Left cardiac atrium (tissue), 4 donors: ENCODE measurements at regions of chr11 and their contacts with region 1.

Region 1: DNA sequence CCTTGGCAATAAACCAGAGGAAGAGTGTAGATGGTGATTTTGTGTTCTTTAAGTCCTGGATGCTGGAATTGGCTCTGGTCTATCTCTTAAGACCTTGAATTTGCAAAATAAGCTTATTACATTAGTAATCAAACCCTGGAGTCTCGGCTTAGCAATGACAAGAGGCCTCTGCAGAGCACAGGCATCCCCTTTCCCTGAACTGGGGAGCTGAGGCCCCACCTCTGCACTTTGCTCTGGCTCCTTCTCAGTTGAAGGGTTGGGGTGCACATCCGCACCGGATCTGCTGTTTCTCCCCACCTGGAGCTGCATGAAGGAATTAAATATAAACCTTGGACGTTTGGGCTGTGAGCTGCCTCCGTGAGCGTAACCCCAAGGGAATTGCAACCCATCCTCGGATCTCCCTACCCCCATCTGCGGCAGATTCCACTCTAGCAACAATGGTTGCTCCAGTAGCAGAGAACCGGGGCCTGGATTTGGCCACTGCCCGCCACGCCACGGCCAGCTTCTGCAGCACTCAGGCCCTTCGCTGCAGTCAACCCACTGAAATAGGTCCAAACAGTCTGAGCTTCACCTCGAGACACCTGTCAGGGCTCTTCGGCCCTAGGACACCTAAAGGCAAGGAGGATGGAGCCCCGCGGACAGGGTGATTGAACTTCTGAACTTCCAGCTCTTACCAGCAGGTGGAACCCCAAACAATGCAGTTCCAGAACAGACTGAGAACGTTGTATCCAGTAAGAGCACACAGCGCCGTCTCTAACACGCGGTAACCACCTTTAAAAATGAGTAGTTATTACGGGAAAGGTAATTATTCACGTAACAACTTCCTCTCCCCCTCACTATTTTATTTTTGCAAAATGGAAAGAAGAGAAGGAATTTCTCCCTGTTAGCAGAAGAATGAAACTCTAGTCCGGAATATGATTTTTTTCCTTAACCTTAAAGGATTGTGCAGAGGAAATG is 54.8 kb upstream of the CAPRIN1 start:
- DNase-seq: peak; percentile 62
- ATAC-seq: peak; percentile 96 to 98

Region 2: DNA sequence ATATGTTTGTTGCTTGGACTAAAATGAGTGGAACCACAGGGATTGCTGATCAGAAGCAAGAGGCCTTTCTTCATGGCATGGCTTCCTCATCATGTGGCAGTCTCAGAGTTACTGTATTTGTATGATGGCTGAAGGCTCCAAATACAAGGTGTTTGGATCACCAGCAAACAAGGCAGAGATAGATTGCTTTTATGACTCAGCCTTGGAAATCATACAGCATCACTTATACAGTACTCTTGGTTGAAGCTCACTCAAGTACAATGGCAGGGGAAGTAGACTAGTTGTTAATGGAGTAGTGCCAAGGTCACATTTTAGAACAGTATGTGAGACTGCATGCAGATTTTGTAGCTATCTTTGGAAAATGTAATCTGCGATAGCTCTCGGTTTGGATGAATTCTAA is 71.3 kb after region 1 on chr11:
- intact Hi-C with region 1: no loop called
- DNase-seq: no peak
- ATAC-seq: peak; percentile 88 to 90

Region 3: GRCh38 chr11:34105079-34105956 is 108.5 kb after region 1 on chr11 and contains the start of gene NAT10:
- intact Hi-C with region 1: loop called in 1 of 2 experiments (anchors 10 kb)
- DNase-seq: peak; percentile 98
- ATAC-seq: peak; percentile 98
- total RNA-seq, gene NAT10: 20.1 to 29.0 TPM

Region 4: GRCh38 chr11:34174412-34175041 is 177.8 kb after region 1 on chr11:
- intact Hi-C with region 1: loop called in 1 of 2 experiments (anchors 5 kb)
- DNase-seq: peak; percentile 88
- ATAC-seq: peak; percentile 98

Region 5: DNA sequence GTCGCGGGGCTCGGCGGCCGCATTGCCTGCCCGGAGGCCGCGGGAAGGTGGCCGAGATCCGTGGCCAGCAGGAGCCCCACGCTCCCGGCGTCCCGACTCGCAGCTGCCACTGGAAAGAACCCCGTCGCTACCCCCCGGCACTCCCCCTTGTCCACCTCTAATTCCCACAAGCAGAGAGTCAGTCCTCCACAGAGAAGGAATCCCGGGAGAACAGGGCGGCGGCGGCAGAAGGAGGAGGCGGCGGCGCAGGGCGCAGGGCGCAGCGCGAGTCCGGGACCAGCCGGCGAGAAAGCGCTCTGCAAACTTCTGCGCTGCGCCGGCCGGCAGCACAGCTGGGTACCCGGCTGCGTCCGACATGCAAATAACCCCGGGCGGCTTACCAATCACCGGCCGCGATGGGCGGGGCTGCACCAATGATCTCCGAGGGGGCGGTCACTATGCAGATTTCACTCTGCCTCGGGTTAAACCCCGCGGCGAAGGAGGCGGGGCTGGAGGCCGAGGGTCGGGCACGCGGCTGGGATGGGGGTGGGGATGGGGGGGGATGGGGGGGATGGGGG is 361.0 kb after region 1 on chr11 and contains the start of gene ABTB2:
- intact Hi-C with region 1: loop called (anchors 2 to 5 kb)
- DNase-seq: peak; percentile 98
- ATAC-seq: peak; percentile 93 to 95
- total RNA-seq, gene ABTB2: 12.5 to 19.3 TPM

Region 6: DNA sequence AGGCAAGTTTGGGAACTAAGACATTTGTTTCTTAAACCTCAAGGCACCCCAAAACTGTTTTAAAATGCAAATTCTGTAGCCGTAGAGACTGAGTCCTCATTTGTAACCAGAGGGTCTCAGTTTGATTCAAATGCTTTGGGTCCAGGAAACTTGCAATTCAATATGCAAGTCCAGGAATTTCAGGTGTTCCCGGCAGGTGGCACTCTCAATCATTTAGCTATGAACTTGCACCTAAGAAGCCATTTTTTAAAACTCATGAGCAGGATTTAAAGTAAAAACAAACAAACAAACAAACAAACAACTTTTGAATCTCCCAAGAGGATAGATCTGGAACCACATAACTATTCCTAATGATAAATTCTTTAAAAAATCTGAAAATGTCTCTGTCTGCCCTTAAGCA is 369.7 kb after region 1 on chr11:
- intact Hi-C with region 1: loop called in 1 of 2 experiments (anchors 5 kb)
- DNase-seq: no peak
- ATAC-seq: no peak